CD8-positive, alpha-beta T cell (primary cell): ENCODE measurements at regions of chr19 and their contacts with region 1.

Region 1: DNA sequence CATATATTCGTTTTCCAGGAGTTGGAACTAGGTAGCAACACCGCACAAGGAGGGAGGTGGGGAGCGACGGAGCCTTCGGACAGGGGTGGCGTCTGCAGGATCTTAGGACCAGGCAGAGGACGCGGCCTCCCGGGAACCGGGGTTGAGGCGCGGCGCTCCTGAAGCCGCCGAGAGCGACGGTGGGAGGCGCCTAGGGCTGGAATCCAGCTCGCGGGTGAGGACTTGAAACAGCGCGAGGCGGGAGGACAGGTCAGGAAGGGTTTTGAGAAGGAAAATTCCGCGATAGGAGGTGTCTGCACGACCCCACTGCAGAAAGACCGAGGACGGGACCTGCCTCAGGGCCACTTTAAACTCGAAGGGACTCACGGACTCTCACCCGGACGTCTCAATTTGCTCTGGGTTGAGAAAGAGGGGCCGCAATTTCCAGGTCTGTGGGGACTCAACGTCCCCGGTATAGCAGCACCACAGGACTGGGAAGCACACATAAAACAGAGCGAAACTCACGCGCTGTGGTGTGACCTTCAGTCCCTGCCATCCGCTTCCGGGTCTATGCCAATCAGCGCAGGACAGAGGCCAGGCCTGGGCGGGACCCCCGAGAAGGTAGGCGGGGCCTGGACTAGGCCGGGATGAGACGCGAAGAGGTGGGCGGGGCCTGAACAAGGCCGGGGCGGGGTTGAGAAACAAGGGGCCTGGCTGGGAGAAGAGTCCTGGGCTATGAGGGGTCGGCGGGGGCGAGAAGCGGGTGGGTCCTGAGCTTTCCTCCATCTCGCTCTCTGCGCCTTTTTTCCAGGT is at the start of gene ZNF320:
- DNase-seq: peak; percentile 80 to 96 (median 90)
- ATAC-seq: peak; percentile 100
- H3K4me3 ChIP-seq: peak within 1 kb of the TSS; percentile 74 to 77
- H3K4me3 Mint-ChIP-seq: peak within 1 kb of the TSS; percentile 93
- H3K27ac ChIP-seq: peak within 1 kb of the TSS; percentile 75
- H3K27ac Mint-ChIP-seq: peak within 1 kb of the TSS; percentile 92
- H3K4me1 ChIP-seq: peaks cover 13% of the 10 kb centered on the region
- H3K4me1 Mint-ChIP-seq: peaks cover 27% of the 10 kb centered on the region
- H3K27me3 ChIP-seq: no peaks in the 10 kb centered on the region
- H3K27me3 Mint-ChIP-seq: no peaks in the 10 kb centered on the region
- CTCF ChIP-seq: no peak
- total RNA-seq, gene ZNF320: 5.5 to 9.5 TPM

Region 2: GRCh38 chr19:52853880-52854279 is 43.5 kb before region 1 on chr19:
- CTCF ChIA-PET with region 1: no interaction called
- POLR2A ChIA-PET with region 1: no interaction called
- intact Hi-C with region 1: loop called (anchors 1 kb)
- DNase-seq: no peak
- ATAC-seq: no peak
- H3K4me3 ChIP-seq: no peak overlapping the region
- H3K4me3 Mint-ChIP-seq: no peak overlapping the region
- H3K27ac ChIP-seq: no peak overlapping the region
- H3K27ac Mint-ChIP-seq: no peak overlapping the region
- H3K4me1 ChIP-seq: peaks cover 5% of the 10 kb centered on the region
- H3K4me1 Mint-ChIP-seq: peaks cover 29% of the 10 kb centered on the region
- H3K27me3 ChIP-seq: no peaks in the 10 kb centered on the region
- H3K27me3 Mint-ChIP-seq: no peaks in the 10 kb centered on the region
- CTCF ChIP-seq: no peak

Region 3: DNA sequence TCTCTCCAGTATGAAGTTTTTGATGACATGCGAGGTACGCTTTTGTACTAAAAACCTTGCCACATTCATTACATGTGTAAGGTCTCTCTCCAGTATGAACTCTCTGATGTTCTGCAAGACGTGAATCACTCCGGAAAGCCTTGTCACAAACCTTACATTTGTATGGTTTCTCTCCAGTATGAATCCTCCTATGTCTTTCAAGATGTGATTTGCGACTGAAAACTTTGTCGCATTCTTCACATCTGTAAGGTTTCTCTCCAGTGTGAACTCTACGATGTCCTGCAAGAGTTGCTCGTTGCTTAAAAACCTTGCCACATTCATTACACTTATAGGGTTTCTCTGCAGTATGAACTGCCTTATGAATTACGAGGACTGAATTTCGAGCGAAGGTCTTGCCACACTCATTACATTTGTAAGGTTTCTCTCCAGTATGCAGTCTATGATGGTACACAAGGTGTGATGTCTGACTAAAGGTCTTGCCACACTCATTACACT is 16.4 kb before region 1 on chr19:
- CTCF ChIA-PET with region 1: no interaction called
- POLR2A ChIA-PET with region 1: no interaction called
- intact Hi-C with region 1: no loop called
- DNase-seq: no peak
- ATAC-seq: no peak
- H3K4me3 ChIP-seq: no peak overlapping the region
- H3K4me3 Mint-ChIP-seq: no peak overlapping the region
- H3K27ac ChIP-seq: no peak overlapping the region
- H3K27ac Mint-ChIP-seq: no peak overlapping the region
- H3K4me1 ChIP-seq: no peaks in the 10 kb centered on the region
- H3K4me1 Mint-ChIP-seq: no peaks in the 10 kb centered on the region
- H3K27me3 ChIP-seq: no peaks in the 10 kb centered on the region
- H3K27me3 Mint-ChIP-seq: no peaks in the 10 kb centered on the region
- CTCF ChIP-seq: no peak

Region 4: DNA sequence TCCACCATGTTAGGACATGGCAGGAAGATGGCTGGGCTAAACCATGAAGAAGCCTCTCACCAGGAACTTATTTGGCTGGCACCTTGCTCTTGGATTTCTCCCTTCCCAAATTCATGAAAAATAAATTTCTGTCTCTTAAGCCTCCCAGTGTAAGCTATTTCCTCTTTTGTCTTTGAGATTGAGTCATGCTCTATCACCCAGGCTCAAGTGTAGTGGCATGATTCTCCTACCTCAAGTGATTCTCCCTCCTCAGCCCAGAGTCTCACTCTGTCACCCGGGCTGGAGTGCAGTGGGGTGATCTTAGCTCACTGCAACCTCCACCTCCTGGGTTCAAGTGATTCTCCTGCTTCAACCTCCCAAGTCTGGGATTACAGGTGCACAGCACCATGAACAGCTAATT is 13.3 kb after region 1 on chr19:
- CTCF ChIA-PET with region 1: no interaction called
- POLR2A ChIA-PET with region 1: no interaction called
- intact Hi-C with region 1: no loop called
- DNase-seq: no peak
- ATAC-seq: no peak
- H3K4me3 ChIP-seq: no peak overlapping the region
- H3K4me3 Mint-ChIP-seq: no peak overlapping the region
- H3K27ac ChIP-seq: no peak overlapping the region
- H3K27ac Mint-ChIP-seq: no peak overlapping the region
- H3K4me1 ChIP-seq: no peaks in the 10 kb centered on the region
- H3K4me1 Mint-ChIP-seq: no peaks in the 10 kb centered on the region
- H3K27me3 ChIP-seq: no peaks in the 10 kb centered on the region
- H3K27me3 Mint-ChIP-seq: no peaks in the 10 kb centered on the region
- CTCF ChIP-seq: no peak

Region 5: DNA sequence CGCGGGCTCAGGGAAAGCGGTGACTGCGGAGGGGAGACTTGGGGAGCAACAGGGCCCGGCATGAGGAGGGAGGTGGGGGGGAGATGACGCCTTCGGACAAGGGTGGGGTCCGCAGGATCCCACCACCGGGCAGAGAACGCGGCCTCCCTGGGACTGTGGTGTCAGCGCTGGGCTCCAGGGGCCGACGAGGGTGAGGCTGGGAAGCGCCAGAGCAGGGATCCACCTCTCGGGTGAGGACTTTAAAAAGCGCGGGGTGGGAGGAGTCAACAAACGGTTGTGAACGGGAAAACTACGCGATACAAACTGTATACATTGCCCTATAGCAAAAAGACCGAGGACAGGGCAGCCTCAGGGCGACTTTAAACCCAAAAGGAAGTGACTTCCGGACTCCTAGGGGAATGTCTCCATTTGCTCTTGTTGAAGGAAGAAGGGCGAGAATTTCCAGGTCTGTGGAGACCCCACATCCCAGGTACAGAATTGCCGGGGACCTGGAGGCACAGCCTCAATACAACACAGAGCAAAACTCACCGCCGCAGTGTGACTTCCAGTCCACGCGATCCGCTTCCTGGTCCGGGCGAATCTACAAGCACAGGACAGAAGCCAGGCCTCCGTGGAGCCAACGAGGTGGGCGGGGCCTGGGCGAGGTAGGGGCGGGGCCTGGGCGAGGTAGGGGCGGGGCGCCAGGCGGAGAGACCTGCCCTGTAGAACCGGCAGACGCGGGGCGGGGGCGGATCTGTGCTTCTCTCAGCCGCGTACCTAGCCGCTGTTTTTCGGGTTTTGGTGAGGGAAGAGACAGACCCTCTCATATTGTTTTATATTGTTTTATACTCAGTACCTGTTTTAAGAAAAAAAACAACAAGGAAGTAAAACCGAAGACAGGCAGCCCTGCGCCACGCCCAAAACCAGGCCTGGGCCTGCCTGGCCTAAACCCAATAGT is 25.8 kb after region 1 on chr19 and contains the start of gene ZNF888:
- CTCF ChIA-PET with region 1: no interaction called
- POLR2A ChIA-PET with region 1: no interaction called
- intact Hi-C with region 1: loop called (anchors 1 kb)
- DNase-seq: peak; percentile 74 to 90 (median 82)
- ATAC-seq: peak; percentile 100
- H3K4me3 ChIP-seq: peak within 1 kb of the TSS; percentile 93 to 97
- H3K4me3 Mint-ChIP-seq: peak within 1 kb of the TSS; percentile 94
- H3K27ac ChIP-seq: peak within 1 kb of the TSS; percentile 62 to 75
- H3K27ac Mint-ChIP-seq: peak within 1 kb of the TSS; percentile 90
- H3K4me1 ChIP-seq: peaks cover 14% of the 10 kb centered on the region
- H3K4me1 Mint-ChIP-seq: peaks cover 33% of the 10 kb centered on the region
- H3K27me3 ChIP-seq: no peaks in the 10 kb centered on the region
- H3K27me3 Mint-ChIP-seq: no peaks in the 10 kb centered on the region
- CTCF ChIP-seq: no peak
- total RNA-seq, gene ZNF888: 4.5 to 4.9 TPM

Region 6: DNA sequence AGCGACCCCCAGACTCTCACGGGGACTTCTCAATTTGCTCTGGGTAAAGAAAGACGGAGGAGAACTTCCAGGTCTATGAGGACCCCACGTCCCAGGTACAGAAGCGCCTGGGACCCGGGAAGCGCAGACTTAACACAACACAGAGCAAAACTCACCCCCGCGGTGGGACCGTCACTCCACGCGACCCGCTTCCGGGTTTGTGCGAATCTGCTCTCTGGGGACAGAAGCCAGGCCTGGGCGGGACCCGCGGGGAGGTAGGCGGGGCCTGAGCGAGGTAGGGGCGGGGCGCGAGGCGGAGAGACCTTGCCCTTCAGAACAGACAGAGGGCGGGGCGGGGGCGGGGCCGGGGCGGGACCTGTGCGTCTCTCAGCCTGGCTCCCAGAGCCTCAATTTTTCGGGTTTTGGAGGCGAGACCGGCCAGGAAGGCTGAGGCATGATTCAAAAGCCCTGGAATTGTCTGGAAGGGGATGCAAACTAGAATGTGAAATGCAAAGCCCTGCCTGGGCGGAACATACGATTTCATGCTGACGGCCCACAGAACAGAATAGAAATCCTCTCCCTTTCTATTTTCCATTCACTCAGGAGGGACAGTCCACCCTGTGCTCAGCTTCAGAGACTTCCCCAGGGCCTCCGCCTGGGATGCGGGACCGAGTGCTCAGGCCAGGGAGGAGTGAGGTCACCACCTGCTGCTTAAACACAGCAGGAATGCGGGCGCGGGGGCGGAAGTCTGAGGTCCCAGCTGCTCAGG is 45.2 kb after region 1 on chr19:
- CTCF ChIA-PET with region 1: interaction called, 3 read pairs
- POLR2A ChIA-PET with region 1: no interaction called
- intact Hi-C with region 1: loop called (anchors 1 kb)
- DNase-seq: peak; percentile 91 to 97 (median 95)
- ATAC-seq: peak; percentile 99
- H3K4me3 ChIP-seq: peak overlapping the region; percentile 88 to 91
- H3K4me3 Mint-ChIP-seq: peak overlapping the region; percentile 95
- H3K27ac ChIP-seq: peak overlapping the region; percentile 66 to 86
- H3K27ac Mint-ChIP-seq: peak overlapping the region; percentile 93
- H3K4me1 ChIP-seq: peaks cover 7% of the 10 kb centered on the region
- H3K4me1 Mint-ChIP-seq: peaks cover 28% of the 10 kb centered on the region
- H3K27me3 ChIP-seq: no peaks in the 10 kb centered on the region
- H3K27me3 Mint-ChIP-seq: no peaks in the 10 kb centered on the region
- CTCF ChIP-seq: no peak

Region 7: GRCh38 chr19:52993323-52994178 is 96.2 kb after region 1 on chr19:
- CTCF ChIA-PET with region 1: no interaction called
- POLR2A ChIA-PET with region 1: no interaction called
- intact Hi-C with region 1: loop called (anchors 1 kb)
- DNase-seq: peak; percentile 64 to 84 (median 77)
- ATAC-seq: peak; percentile 96
- H3K4me3 ChIP-seq: peak overlapping the region; percentile 38 to 65
- H3K4me3 Mint-ChIP-seq: peak overlapping the region; percentile 90
- H3K27ac ChIP-seq: no peak overlapping the region
- H3K27ac Mint-ChIP-seq: peak overlapping the region; percentile 60
- H3K4me1 ChIP-seq: peaks cover 6% of the 10 kb centered on the region
- H3K4me1 Mint-ChIP-seq: peaks cover 23% of the 10 kb centered on the region
- H3K27me3 ChIP-seq: no peaks in the 10 kb centered on the region
- H3K27me3 Mint-ChIP-seq: peaks cover 4% of the 10 kb centered on the region
- CTCF ChIP-seq: peak; percentile 81

Region 8: GRCh38 chr19:53467485-53468262 is 570.3 kb after region 1 on chr19 and contains the start of gene ZNF813:
- CTCF ChIA-PET with region 1: no interaction called
- POLR2A ChIA-PET with region 1: no interaction called
- intact Hi-C with region 1: loop called in 1 of 2 experiments (anchors 1 kb)
- DNase-seq: peak; percentile 93 to 98 (median 95)
- ATAC-seq: peak; percentile 98
- H3K4me3 ChIP-seq: peak within 1 kb of the TSS; percentile 73 to 91
- H3K4me3 Mint-ChIP-seq: peak within 1 kb of the TSS; percentile 92
- H3K27ac ChIP-seq: peak within 1 kb of the TSS; percentile 64 to 79
- H3K27ac Mint-ChIP-seq: peak within 1 kb of the TSS; percentile 89
- H3K4me1 ChIP-seq: peaks cover 7% of the 10 kb centered on the region
- H3K4me1 Mint-ChIP-seq: peaks cover 26% of the 10 kb centered on the region
- H3K27me3 ChIP-seq: no peaks in the 10 kb centered on the region
- H3K27me3 Mint-ChIP-seq: peaks cover 18% of the 10 kb centered on the region
- CTCF ChIP-seq: no peak
- total RNA-seq, gene ZNF813: 3.8 TPM